Panc1 (cell line): ENCODE measurements at regions of chr7 and their contacts with region 1.

Region 1: DNA sequence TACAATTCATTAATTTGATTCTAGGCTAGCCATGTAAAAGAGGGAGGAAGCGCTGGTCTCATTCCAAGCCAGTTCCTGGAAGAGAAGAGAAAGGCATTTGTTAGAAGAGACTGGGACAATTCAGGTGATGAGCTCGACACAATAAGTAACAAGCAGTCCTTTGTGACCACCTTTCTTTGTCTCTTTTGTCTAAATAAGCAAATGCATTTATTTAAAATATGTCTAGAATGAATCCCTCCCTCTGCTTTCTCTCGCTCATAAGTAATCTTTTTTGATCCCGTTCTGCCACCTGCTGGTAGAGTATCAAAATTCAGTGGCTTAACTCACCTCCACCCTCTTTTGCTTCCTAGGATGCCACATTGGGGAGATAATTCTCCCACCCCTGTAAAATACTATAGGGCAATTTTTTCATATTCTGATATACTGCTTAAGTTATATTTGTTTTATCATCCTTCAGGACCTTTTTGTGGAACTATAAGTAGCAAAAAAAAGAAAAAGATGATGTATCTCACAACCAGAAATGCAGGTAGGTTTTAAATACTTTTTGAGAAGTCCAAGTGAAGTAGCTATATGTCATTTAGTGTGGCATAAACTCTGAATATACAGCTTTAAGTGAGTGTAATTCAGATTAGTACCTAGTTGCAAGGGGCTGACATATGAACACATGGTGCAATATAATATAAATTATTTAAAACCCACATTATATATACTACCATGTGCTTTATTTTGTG is 91.5 kb downstream of the GSDME start:
- DNase-seq: peak; percentile 36
- ATAC-seq: peak; percentile 87
- H3K4me3 ChIP-seq: no peak overlapping the region
- H3K27ac ChIP-seq: 0 out of 2 replicates have a peak overlapping the region, but pooled peaks have one; percentile 7
- H3K4me1 ChIP-seq: no peaks in the 10 kb centered on the region
- H3K27me3 ChIP-seq: no peaks in the 10 kb centered on the region
- CTCF ChIP-seq: peak; percentile 80

Region 2: GRCh38 chr7:24290004-24290641 is 375.6 kb before region 1 on chr7:
- CTCF ChIA-PET with region 1: no interaction called
- POLR2A ChIA-PET with region 1: no interaction called
- in situ Hi-C with region 1: no loop called
- intact Hi-C with region 1: loop called (anchors 1 kb)
- DNase-seq: peak; percentile 36
- ATAC-seq: peak; percentile 97
- H3K4me3 ChIP-seq: no peak overlapping the region
- H3K27ac ChIP-seq: no peak overlapping the region
- H3K4me1 ChIP-seq: peaks cover 3% of the 10 kb centered on the region; the same call in 1 of the 2 replicates
- H3K27me3 ChIP-seq: peaks cover 35% of the 10 kb centered on the region
- CTCF ChIP-seq: peak; percentile 78

Region 3: DNA sequence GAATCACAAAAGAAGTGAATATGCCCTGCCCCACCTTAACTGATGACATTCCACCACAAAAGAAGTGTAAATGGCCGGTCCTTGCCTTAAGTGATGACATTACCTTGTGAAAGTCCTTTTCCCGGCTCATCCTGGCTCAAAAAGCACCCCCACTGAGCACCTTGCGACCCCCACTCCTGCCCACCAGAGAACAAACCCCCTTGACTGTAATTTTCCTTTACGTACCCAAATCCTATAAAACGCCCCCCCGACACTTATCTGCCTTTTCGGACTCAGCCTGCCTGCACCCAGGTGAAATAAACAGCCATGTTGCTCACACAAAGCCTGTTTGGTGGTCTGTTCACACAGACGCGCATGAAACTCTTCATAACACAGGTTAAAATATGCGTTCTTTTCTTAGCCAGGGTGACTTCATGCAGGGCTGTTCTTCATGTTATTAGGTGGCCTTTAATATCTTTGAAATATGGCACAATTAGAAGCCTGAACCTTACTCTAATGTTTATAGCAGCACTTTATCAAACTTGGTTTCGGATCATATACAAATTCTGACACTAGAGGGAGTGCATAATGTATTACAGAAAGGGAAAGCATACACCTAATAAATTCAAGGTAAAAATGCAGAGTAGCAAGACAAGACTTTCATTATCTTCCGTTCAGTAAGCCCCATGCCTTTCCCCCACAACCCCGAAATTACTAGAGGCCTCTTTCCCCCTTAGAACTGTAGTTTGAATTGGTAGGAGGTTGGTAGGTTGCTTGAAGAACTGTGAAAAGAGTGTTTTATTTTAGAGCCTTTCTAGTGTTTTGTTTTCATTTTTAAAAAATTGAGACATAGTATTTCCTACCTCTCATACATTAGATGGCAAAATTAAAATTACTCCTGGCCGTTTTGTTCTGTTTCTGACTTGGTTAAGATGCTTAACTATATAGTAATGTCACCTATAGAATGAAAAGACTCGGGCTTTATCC is 263.8 kb before region 1 on chr7:
- CTCF ChIA-PET with region 1: no interaction called
- POLR2A ChIA-PET with region 1: no interaction called
- in situ Hi-C with region 1: no loop called
- intact Hi-C with region 1: loop called (anchors 5 kb)
- DNase-seq: peak; percentile 33
- ATAC-seq: peak; percentile 79
- H3K4me3 ChIP-seq: 0 out of 4 replicates have a peak overlapping the region, but pooled peaks of 1 of the 2 experiments have one; percentile 7
- H3K27ac ChIP-seq: no peak overlapping the region
- H3K4me1 ChIP-seq: no peaks in the 10 kb centered on the region
- H3K27me3 ChIP-seq: peaks cover 4% of the 10 kb centered on the region; the same call in 1 of the 2 replicates
- CTCF ChIP-seq: peak; percentile 74

Region 4: GRCh38 chr7:24572997-24573625 is 92.6 kb before region 1 on chr7 and contains the start of gene PALS2:
- CTCF ChIA-PET with region 1: interaction called, 4 read pairs
- POLR2A ChIA-PET with region 1: no interaction called
- in situ Hi-C with region 1: no loop called
- intact Hi-C with region 1: loop called (anchors 1 kb)
- DNase-seq: no peak
- ATAC-seq: peak; percentile 82
- H3K4me3 ChIP-seq: peak within 1 kb of the TSS; percentile 65 to 90
- H3K27ac ChIP-seq: peak within 1 kb of the TSS; percentile 83
- H3K4me1 ChIP-seq: peaks cover 16% of the 10 kb centered on the region
- H3K27me3 ChIP-seq: peaks cover 28% of the 10 kb centered on the region
- CTCF ChIP-seq: no peak
- total RNA-seq, gene PALS2: 48.2 TPM